Heart left ventricle (tissue), 16 donors: ENCODE measurements at regions of chr9 and their contacts with region 1.

Region 1: GRCh38 chr9:131187957-131188356 is 62.6 kb downstream of the NUP214 start:
- DNase-seq: no peak
- ATAC-seq: no peak
- H3K4me3 ChIP-seq: no peak overlapping the region
- H3K27ac ChIP-seq: no peak overlapping the region
- H3K4me1 ChIP-seq: peaks cover 0 to 4% (median 0%) of the 10 kb centered on the region in 12 donors
- H3K27me3 ChIP-seq: no peaks in the 10 kb centered on the region
- CTCF ChIP-seq: no peak
- POLR2A ChIP-seq: no peak

Region 2: GRCh38 chr9:131227112-131227958 is 39.4 kb after region 1 on chr9:
- intact Hi-C with region 1: loop called in 2 of 10 experiments (anchors 5 kb)
- DNase-seq: peak in 2 of 5 donors; percentile 33 to 45
- ATAC-seq: peak in 1 of 4 donors; percentile 42
- H3K4me3 ChIP-seq: peak overlapping the region in 1 of 12 donors; percentile 60
- H3K27ac ChIP-seq: peak overlapping the region in 1 of 12 donors; percentile 78
- H3K4me1 ChIP-seq: peaks cover 0 to 29% (median 12%) of the 10 kb centered on the region in 12 donors
- H3K27me3 ChIP-seq: no peaks in the 10 kb centered on the region
- CTCF ChIP-seq: no peak
- POLR2A ChIP-seq: no peak

Region 3: GRCh38 chr9:131237931-131238401 is 50.0 kb after region 1 on chr9:
- intact Hi-C with region 1: loop called in 1 of 10 experiments (anchors 5 kb)
- DNase-seq: peak; percentile 69 to 87 (median 82)
- ATAC-seq: peak; percentile 36 to 65 (median 64)
- H3K4me3 ChIP-seq: peak overlapping the region in 5 of 12 donors; percentile 1 to 35 (median 19)
- H3K27ac ChIP-seq: peak overlapping the region; percentile 62 to 96 (median 85)
- H3K4me1 ChIP-seq: peaks cover 0 to 58% (median 39%) of the 10 kb centered on the region in 12 donors
- H3K27me3 ChIP-seq: no peaks in the 10 kb centered on the region
- CTCF ChIP-seq: no peak
- POLR2A ChIP-seq: no peak